HEK293 (cell line): ENCODE measurements at regions of chr21 and their contacts with region 1.

Region 1: GRCh38 chr21:34510148-34511142 is 1.6 kb downstream of the KCNE1 start:
- H3K4me3 ChIP-seq: no peak overlapping the region
- H3K27ac ChIP-seq: no peak overlapping the region
- H3K4me1 ChIP-seq: no peaks in the 10 kb centered on the region
- CTCF ChIP-seq: peak; percentile 59; the same call in 1 of the 2 replicates

Region 2: DNA sequence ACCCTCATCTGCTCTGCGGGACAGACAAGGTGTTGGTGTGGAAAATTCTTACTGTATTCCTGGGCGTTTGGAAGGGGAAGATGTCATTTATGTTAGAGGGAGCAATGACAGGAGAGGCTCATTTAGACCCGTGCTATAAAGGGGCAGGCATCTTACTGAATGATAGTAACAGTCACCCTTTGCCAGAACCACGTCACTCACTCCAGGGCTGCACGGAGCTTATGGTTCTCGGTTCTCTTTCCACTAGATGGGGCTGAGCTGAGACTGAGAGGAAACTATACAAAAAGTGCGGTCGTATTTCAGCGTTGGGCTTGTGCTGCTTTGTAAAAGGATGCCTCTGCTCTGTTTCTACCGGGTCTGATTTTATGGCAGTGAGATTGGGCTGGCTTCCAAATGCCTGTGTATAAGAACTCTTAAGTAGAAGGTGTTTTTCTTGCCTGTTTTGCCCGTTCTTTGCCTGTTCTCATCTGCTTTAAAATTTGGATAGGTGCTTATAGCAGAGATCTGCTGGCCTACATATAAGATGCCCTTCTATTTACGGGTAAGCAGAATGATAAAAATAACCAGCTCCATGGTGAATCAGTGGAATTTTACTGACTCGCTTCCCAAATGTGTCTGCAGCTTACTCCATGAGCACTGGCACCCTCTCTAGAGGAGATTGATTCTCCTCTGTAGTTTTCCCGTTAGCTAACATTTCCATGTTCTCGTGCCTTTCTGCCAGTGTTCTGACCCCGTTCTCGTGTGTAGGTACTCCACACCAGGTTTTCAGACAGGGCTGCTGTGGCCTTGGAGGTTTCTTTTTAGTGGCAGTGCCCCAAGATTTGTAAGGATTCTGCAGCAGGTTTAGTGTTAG is 381.2 kb before region 1 on chr21:
- CTCF ChIA-PET with region 1: no interaction called
- POLR2A ChIA-PET with region 1: no interaction called
- H3K4me3 ChIP-seq: no peak overlapping the region
- H3K27ac ChIP-seq: peak overlapping the region; percentile 59
- H3K4me1 ChIP-seq: peaks cover 26% of the 10 kb centered on the region
- CTCF ChIP-seq: peak; percentile 74; the same call in 1 of the 2 replicates

Region 3: DNA sequence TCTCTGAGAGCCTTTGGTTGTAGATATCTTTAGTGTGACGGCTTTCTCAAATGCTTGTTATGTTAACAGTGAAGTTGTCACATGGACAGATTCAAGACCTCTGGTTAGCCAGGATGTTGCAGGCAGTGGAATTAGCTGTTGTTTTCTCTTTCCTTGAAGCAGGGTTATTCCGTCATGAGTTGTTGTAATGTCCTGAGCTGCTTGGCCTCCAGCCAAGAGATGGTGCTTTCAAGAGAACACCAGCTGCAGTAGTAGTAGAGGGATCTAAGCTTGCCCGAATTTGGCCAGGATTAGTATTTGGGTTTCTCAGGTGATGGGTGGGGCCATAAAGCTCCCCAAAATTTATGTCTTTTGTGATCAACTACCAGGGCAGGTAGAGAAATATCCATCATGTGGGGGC is 11.8 kb before region 1 on chr21:
- CTCF ChIA-PET with region 1: interaction called, 26 read pairs
- POLR2A ChIA-PET with region 1: no interaction called
- H3K4me3 ChIP-seq: no peak overlapping the region
- H3K27ac ChIP-seq: no peak overlapping the region
- H3K4me1 ChIP-seq: no peaks in the 10 kb centered on the region
- CTCF ChIP-seq: no peak

Region 4: DNA sequence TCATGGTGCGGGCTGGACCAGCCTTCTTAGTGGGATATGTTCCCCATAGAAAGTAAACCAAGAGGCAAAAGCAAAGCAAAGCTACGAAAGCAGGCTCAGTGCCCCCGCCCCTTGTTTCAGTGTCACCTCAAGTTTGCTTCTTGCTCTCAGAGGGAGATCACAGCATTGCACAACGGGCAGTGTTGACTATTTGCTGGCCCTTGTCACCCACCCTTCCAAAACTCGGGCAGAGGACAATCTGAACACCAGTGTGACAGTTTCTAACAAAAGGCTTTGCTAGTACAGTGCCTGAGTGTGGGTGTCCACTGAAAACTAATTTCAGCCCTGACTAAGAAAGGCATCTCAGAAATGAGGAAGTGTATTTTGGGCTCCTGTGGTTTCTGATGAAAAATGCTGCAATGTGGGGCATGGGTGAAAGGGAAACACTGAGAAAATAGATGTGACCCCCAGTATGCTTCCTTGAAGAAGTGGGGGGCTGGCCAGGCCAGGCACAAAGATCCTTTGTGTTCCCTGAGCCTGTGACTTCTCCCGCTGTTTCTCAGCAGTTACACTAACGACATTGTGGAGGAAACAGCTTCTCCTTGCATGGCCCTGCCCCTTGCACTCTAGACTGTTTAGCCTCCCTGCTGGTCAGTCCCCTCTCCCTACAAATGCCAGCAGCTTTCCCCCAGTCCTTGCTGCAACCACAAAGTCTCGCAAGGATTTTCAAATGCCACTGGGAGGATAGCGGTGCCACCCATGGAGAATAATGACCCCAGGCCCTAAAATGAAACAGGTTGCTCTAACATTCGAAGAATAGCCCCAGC is 34.8 kb after region 1 on chr21:
- CTCF ChIA-PET with region 1: interaction called, 38 read pairs
- POLR2A ChIA-PET with region 1: no interaction called
- H3K4me3 ChIP-seq: no peak overlapping the region
- H3K27ac ChIP-seq: no peak overlapping the region
- H3K4me1 ChIP-seq: no peaks in the 10 kb centered on the region
- CTCF ChIP-seq: no peak

Region 5: DNA sequence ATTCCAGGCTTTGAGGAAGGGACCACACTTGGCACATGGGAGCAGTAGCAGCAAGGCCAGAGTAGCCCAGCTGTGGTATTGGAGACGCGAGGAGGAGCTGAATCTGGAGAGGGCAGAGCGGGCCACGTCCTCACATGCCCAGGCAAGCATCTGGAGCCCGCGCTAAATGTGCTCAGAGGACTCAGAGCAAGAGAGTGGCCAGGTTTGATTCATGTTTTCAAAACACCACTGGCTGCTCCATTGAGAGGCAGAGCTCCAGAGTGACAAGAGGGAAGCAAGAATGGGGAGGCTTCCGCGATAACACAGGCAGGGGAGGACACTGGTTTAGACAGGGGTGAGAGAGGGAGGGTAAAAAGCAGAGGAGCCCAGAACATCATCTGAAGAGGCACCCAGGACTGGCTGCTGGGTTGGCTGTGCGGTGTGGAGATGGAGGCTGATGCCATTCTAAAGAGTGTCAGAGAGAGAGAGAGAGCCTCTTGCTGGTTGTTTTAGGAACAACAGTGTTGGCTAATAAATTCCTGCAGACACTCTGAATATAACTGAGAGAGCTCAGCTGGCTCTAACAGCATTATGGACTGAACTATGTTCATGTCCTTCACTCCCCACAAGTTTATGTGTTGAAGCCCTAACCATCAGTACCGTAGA is 72.2 kb after region 1 on chr21:
- CTCF ChIA-PET with region 1: interaction called, 22 read pairs
- POLR2A ChIA-PET with region 1: no interaction called
- H3K4me3 ChIP-seq: no peak overlapping the region
- H3K27ac ChIP-seq: no peak overlapping the region
- H3K4me1 ChIP-seq: no peaks in the 10 kb centered on the region
- CTCF ChIP-seq: no peak

Region 6: DNA sequence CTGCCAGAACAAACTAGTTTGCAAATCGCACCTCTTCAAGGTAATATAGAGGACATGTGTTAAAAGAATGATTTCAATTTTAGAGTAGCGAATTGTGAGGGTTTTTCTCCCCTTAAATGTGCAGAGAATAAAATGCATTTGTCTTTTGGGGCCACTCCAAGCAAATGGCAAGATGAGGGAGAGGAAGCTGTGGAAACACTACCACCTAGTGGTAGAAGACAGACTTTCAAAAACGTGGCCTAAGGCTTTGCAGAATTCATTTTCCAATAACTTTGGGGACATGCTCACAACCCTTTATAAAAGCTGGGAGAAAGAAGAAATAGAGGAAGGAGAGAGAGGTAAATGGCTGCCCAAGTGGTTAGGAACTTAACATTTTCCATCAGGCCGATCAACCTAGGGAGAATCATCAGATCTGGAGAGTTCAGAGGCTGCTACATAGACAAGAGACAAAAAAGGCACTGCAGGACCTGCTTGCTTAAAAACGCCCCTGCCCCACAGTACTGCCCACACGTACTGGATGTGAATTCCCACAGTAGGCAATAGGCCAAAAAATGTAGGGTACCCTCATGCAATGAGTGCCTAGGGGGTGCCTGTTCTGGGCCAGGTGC is 120.2 kb after region 1 on chr21:
- CTCF ChIA-PET with region 1: interaction called, 70 read pairs
- POLR2A ChIA-PET with region 1: interaction called, 8 read pairs
- H3K4me3 ChIP-seq: no peak overlapping the region
- H3K27ac ChIP-seq: no peak overlapping the region
- H3K4me1 ChIP-seq: no peaks in the 10 kb centered on the region
- CTCF ChIP-seq: peak; percentile 75

Region 7: DNA sequence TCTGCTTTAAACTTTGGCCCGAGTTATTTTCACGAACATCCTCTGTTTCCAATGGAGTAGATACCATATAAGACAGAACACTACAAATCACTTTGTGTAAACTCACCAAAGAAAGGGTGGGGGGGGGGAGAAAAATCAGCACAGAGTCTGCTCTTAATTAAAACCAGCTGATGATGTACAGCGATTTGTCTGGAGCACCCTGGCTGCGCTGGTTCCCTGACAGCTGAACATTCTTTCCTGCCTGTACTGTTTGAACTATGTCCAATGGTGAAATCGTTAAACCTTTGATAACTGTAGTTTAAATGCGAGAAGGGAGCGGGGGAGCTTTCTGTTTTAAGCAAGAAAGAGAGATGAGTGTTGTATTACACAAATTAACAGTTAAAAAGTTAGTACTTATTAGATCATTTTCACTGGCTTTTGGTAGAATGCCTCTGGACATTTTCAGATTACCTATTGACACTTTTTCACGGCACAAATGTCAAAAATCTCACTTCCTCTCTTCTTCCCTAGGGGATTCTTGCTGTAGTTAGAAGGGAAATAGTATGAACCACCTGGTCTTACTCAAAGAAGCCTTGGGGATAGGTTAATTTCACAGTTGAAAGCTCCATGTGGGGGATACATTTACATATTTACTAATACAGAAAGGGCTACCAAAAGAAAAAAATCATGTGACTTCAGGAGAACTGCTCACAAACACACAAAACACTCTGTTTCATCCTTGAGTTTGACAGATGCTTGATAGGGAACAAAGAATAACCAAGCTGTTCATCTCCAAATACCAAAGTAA is 678.8 kb after region 1 on chr21:
- CTCF ChIA-PET with region 1: no interaction called
- POLR2A ChIA-PET with region 1: no interaction called
- H3K4me3 ChIP-seq: no peak overlapping the region
- H3K27ac ChIP-seq: no peak overlapping the region
- H3K4me1 ChIP-seq: no peaks in the 10 kb centered on the region
- CTCF ChIP-seq: no peak